A549 (cell line): ENCODE measurements at regions of chr1 and their contacts with region 1.

Region 1: DNA sequence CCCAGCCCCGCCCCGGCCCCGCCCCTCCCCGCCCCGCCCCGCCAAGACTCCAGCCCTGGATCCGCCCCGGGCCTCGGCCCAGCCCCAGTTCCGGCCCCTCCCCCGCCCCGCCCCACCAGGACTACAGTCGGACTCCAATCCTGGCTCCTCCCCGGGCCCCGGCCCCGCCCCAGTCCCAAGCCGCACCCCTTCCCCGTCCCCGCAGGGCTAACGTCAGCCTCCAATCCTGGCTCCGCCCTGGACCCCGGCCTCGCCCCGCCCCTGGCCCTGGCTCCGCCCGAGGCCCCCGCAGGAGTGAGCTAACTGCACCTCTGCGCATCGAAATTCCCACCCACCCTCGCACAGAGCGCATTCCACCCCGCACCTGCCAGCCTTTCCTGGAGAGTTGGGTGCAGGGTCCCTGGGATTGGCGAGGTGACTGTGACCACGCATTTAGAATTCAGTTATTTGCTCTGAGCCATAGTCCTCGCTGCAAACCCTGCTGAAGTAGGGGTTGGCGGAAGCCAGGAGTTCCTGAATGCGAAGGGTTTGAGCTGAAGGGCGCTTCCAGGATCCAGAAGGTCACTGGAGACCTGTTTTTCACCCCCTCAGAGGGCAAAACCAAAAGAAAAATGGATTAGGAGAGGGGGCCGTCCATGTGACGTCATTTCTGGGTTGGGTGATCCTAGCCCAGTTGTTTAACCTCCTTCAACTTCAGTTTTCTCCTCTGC is 588 bp upstream of the IGSF8 start:
- DNase-seq: peak; percentile 92
- ATAC-seq: peak; percentile 80 to 89
- H3K4me3 ChIP-seq: peak overlapping the region; percentile 83
- H3K27ac ChIP-seq: peak overlapping the region; percentile 74 to 82
- H3K4me1 ChIP-seq: peaks cover 37% of the 10 kb centered on the region
- CTCF ChIP-seq: no peak
- EP300 ChIP-seq: no peak
- POLR2A ChIP-seq: peak; percentile 17; the same call in 1 of the 2 replicates
- RAD21 ChIP-seq: no peak

Region 2: DNA sequence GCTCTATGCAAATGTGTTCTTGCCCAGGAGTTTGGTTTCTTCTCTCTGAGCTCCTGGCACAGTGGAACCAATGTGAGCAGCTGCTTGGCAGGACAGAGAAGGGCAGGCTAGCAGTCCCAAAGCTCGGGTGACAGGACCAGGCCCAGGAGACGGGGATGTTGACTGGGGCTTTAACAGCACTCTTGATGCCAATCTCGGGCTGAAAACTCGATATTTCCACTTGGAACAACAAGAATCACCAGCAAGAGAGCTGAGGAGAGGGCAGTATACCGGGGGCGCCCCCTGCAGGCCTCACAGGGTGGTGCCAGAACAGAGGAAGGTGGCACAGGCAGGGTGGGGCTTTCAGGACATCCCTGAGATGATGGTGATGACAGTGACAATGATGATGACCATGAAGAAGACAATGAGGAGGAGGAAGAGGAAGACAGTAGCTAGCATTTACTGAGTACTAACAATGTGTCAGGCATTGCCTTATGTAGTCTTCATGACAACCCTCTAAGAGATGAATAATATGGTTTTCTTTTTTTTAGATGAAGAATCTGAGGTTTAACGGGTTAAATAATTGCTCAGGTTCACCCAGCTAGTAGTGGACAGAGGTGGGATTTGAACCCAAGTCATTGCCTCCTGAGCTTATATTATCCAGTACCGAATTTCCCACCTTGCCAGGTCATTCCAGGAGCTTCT is 20.4 kb before region 1 on chr1:
- CTCF ChIA-PET with region 1: interaction called, 20 read pairs
- POLR2A ChIA-PET with region 1: no interaction called
- DNase-seq: peak; percentile 42 to 51
- ATAC-seq: peak; percentile 51 to 88; a peak in 4 of 6 replicates
- H3K4me3 ChIP-seq: no peak overlapping the region
- H3K27ac ChIP-seq: no peak overlapping the region
- H3K4me1 ChIP-seq: no peaks in the 10 kb centered on the region
- CTCF ChIP-seq: peak; percentile 54
- EP300 ChIP-seq: no peak
- POLR2A ChIP-seq: no peak
- RAD21 ChIP-seq: peak; percentile 44 to 49

Region 3: DNA sequence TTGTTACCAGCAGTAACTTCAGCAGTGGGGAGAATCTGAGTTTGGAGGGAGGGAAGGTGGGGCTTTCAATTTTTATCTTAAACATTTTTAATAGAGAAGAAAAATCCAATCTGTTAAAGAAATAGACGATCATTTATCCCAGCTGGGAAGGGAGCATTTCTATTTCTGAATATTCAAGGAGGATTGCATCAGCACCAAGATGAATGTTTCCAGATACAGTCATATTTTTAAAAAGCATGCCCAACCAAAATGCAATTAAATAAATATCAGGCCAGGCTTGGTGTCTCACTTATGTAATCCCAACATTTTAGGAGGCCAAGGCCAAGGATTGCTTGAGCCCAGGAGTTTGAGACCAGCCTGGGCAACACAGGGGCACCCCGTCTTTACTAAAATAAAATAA is 50.7 kb after region 1 on chr1:
- CTCF ChIA-PET with region 1: interaction called, 10 read pairs
- POLR2A ChIA-PET with region 1: no interaction called
- DNase-seq: no peak
- ATAC-seq: no peak
- H3K4me3 ChIP-seq: no peak overlapping the region
- H3K27ac ChIP-seq: peak overlapping the region; percentile 19 to 50; a peak in 3 of 6 replicates
- H3K4me1 ChIP-seq: peaks cover 11% of the 10 kb centered on the region; the same call in 2 of the 3 replicates
- CTCF ChIP-seq: no peak
- EP300 ChIP-seq: no peak
- POLR2A ChIP-seq: no peak
- RAD21 ChIP-seq: no peak

Region 4: DNA sequence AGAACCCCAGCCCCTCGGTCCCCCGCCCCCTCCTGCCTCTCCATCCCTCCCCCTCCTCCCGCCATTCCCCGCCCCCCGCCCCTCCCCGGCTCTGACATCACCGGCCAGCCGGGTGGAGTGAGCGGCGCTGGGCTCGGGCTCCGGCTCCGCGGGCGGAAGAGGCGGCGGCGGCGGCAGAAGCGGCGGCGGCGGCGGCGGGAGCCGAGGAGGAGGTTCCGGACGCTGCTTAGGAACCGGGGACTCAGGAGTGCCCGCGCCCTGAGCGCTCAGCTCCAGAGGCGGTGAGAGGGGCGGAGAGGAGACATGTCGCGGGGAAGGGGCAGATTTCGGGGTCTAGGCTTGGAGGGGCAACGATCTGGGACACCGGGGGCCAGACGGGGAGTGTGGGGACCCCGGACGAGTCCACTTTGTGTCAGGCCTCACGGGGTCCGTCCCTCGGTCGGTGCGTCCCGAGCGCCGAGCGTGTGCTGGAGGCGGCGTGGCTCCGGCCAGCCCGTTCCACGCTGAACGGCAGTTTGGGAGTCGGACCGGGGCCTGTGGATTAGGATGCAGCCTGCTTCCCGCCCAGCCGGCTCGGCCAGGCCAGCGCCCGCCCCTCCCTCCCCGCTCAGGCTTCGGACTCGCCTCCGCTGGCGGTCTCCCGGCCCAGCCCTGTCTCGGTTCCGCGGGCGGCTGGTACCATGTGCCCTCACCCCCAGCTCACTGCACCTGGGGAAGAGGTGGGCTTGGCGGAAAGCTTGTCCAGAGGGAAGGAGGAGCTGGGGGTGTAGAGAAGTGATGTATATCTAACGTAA is 106.4 kb after region 1 on chr1 and contains the start of gene PEA15:
- CTCF ChIA-PET with region 1: interaction called, 52 read pairs
- POLR2A ChIA-PET with region 1: no interaction called
- DNase-seq: peak; percentile 60 to 87
- ATAC-seq: peak; percentile 72 to 81
- H3K4me3 ChIP-seq: peak within 1 kb of the TSS; percentile 88
- H3K27ac ChIP-seq: peak within 1 kb of the TSS; percentile 89 to 96
- H3K4me1 ChIP-seq: peaks cover 45% of the 10 kb centered on the region
- CTCF ChIP-seq: no peak
- EP300 ChIP-seq: no peak
- POLR2A ChIP-seq: peak; percentile 20; the same call in 1 of the 2 replicates
- RAD21 ChIP-seq: no peak
- polyA plus RNA-seq, gene PEA15: 115 and 130 TPM in 2 replicates

Region 5: GRCh38 chr1:160226623-160227022 is 127.6 kb after region 1 on chr1:
- CTCF ChIA-PET with region 1: interaction called, 128 read pairs
- POLR2A ChIA-PET with region 1: no interaction called
- DNase-seq: no peak
- ATAC-seq: no peak
- H3K4me3 ChIP-seq: no peak overlapping the region
- H3K27ac ChIP-seq: no peak overlapping the region
- H3K4me1 ChIP-seq: no peaks in the 10 kb centered on the region
- CTCF ChIP-seq: no peak
- EP300 ChIP-seq: no peak
- POLR2A ChIP-seq: no peak
- RAD21 ChIP-seq: no peak

Region 6: DNA sequence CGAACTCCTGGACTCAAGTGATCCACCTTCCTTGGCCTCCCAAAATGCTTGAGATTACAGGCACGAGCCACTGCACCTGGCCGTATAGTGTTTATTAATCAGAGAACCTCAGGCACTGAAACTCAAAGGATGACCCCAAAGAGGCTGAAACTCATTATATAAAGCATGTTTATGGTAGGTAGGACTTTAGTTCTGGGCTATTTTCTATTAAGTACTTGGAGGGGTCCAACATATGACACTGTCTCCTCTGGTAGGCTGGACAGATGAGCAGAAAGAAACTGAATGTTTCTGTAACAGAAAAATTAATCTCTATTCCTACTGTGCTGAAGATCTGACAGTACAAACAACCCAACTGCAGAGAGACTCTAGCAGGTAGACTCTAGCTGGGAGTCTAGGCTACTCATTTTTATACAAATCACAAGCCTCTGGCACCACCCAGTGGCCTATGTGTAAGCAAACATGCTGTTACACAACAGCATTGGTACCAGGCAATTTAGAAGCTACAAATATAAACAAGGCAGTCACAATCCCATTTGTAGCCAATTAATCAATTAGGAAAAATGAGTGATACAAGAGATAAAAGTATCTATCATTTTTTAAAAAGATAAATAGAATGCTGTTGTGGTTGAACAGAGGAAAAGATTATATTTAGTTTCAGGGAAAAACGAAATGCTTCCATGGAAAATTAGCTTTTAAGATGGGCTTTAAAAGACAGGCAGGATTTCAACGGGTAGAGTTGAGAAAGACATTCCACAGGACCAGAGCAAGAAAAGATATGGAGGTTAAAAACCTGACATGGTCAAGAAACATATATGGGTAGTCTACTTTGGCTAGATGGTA is 152.9 kb after region 1 on chr1:
- CTCF ChIA-PET with region 1: interaction called, 203 read pairs
- POLR2A ChIA-PET with region 1: interaction called, 3 read pairs
- DNase-seq: peak; percentile 70 to 73
- ATAC-seq: peak; percentile 98 to 99
- H3K4me3 ChIP-seq: no peak overlapping the region
- H3K27ac ChIP-seq: no peak overlapping the region
- H3K4me1 ChIP-seq: peaks cover 16% of the 10 kb centered on the region
- CTCF ChIP-seq: peak; percentile 77
- EP300 ChIP-seq: no peak
- POLR2A ChIP-seq: no peak
- RAD21 ChIP-seq: peak; percentile 83 to 85